Gastrocnemius medialis (tissue), 4 donors: ENCODE measurements at regions of chr1 and their contacts with region 1.

Region 1: GRCh38 chr1:27097484-27097917 is 57.4 kb downstream of the SLC9A1 start:
- DNase-seq: peak; percentile 54 to 66
- ATAC-seq: peak; percentile 71 to 84
- H3K4me3 ChIP-seq: no peak overlapping the region
- H3K27ac ChIP-seq: no peak overlapping the region
- H3K4me1 ChIP-seq: peaks cover 0 to 6% of the 10 kb centered on the region in 2 donors
- H3K27me3 ChIP-seq: no peaks in the 10 kb centered on the region
- CTCF ChIP-seq: peak; percentile 92 to 97 (median 94)
- POLR2A ChIP-seq: no peak

Region 2: GRCh38 chr1:26993237-26994019 is 104.1 kb before region 1 on chr1 and contains the start of gene TRNP1:
- in situ Hi-C with region 1: loop called in 3 of 4 experiments (anchors 5 to 10 kb)
- intact Hi-C with region 1: loop called (anchors 1 kb)
- DNase-seq: peak in 1 of 2 donors; percentile 31
- ATAC-seq: peak; percentile 28 to 42
- H3K4me3 ChIP-seq: peak within 1 kb of the TSS; percentile 43 to 75 (median 62)
- H3K27ac ChIP-seq: peak within 1 kb of the TSS in 3 of 4 donors; percentile 29 to 59 (median 53)
- H3K4me1 ChIP-seq: peaks cover 1 to 13% of the 10 kb centered on the region in 2 donors
- H3K27me3 ChIP-seq: peaks cover 23 to 38% (median 36%) of the 10 kb centered on the region in 3 donors
- CTCF ChIP-seq: no peak
- POLR2A ChIP-seq: peak in 1 of 2 donors; percentile 30
- total RNA-seq, gene TRNP1: 1.2 to 5.1 (median 2.0) TPM

Region 3: DNA sequence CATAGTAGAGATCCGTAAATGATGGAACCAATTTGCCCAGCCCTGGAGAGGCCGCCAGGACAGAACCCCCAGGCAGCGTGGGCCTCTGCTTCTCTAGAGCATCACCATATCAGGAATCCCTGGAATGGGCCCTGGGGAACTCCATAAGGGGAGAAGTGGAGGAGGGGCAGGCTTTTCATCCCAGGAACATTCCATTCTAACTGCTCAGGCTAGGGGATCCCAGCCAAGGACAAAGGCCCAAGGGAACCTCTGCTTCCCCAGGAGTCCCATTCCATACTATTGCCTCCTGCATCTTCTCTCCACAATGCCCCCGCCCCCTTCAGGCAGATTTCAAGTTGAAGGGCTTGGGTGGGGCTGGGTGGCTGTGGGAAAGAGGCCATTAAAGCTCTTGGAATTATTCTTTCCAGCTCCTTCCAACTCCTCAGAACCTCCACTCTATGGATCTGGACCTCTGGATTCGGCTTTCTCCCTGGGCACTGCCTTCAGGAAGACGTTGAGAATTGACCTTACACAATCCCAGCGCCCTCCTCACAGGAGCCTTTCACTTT is 98.0 kb before region 1 on chr1:
- in situ Hi-C with region 1: loop called in 3 of 4 experiments (anchors 5 to 10 kb)
- intact Hi-C with region 1: loop called (anchors 1 kb)
- DNase-seq: peak; percentile 61 to 63
- ATAC-seq: peak; percentile 75 to 80
- H3K4me3 ChIP-seq: no peak overlapping the region
- H3K27ac ChIP-seq: peak overlapping the region; percentile 52 to 72 (median 60)
- H3K4me1 ChIP-seq: peaks cover 19 to 23% of the 10 kb centered on the region in 2 donors
- H3K27me3 ChIP-seq: peaks cover 8 to 17% (median 14%) of the 10 kb centered on the region in 3 donors
- CTCF ChIP-seq: no peak
- POLR2A ChIP-seq: no peak

Region 4: GRCh38 chr1:27044613-27045151 is 52.8 kb before region 1 on chr1:
- in situ Hi-C with region 1: loop called (anchors 5 to 10 kb)
- intact Hi-C with region 1: loop called (anchors 1 kb)
- DNase-seq: peak; percentile 69 to 71
- ATAC-seq: peak; percentile 74 to 89
- H3K4me3 ChIP-seq: peak overlapping the region; percentile 14 to 34 (median 18)
- H3K27ac ChIP-seq: no peak overlapping the region
- H3K4me1 ChIP-seq: peaks cover 3% of the 10 kb centered on the region in 2 donors
- H3K27me3 ChIP-seq: no peaks in the 10 kb centered on the region
- CTCF ChIP-seq: peak; percentile 93 to 98 (median 94)
- POLR2A ChIP-seq: no peak